ENCODE measurements at regions of chr12 and their contacts with region 1.

Region 1: GRCh38 chr12:62603061-62603810 is 136.6 kb downstream of the MON2 start:
- DNase-seq: peak; percentile 45
- ATAC-seq: peak; percentile 80
- H3K4me3 ChIP-seq: peak overlapping the region; percentile 77
- H3K27ac ChIP-seq: peak overlapping the region; percentile 99
- H3K4me1 ChIP-seq: peaks cover 17% of the 10 kb centered on the region; the same call in 1 of the 2 replicates
- H3K27me3 ChIP-seq: no peaks in the 10 kb centered on the region
- CTCF ChIP-seq: peak; percentile 28 to 51 (median 40); a peak in 4 of 6 replicates
- EP300 ChIP-seq: peak in 1 of 2 experiments; percentile 17; a peak in 1 of 4 replicates
- POLR2A ChIP-seq: peak; percentile 88
- RAD21 ChIP-seq: peak; percentile 31; the same call in 1 of the 2 replicates

Region 2: DNA sequence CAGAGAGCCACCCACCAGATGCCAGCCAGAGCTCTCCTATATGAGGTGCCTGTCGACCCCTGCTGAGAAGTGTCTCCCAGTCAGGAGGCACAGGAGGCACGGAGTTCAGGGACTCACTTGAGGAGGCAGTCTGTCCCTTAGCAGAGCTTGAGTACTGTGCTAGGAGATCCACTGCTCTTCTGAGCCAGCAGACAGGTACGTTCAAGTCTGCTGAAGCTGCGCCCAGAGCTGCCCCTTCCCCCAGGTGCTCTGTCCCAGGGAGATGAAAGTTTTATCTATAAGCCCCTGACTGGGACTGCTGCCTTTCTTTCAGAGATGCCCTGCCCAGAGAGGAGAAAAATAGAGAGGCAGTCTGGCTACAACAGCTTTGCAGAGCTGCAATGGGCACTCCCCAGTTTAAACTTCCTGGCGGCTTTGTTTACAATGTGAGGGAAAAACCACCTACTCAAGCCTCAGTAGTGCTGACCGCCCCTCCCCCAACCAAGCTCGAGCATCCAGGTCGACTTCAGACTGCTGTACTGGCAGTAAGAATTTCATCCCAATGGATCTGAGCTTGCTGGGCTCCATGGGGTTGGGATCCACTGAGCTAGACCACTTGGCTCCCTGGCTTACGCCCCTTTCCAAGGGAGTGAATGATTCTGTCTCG is 489.7 kb before region 1 on chr12:
- CTCF ChIA-PET with region 1: no interaction called
- POLR2A ChIA-PET with region 1: no interaction called
- RAD21 ChIA-PET with region 1: no interaction called
- SMC1A ChIA-PET with region 1: no interaction called
- in situ Hi-C with region 1: no loop called
- intact Hi-C with region 1: no loop called
- DNase-seq: no peak
- ATAC-seq: no peak
- H3K4me3 ChIP-seq: no peak overlapping the region
- H3K27ac ChIP-seq: no peak overlapping the region
- H3K4me1 ChIP-seq: no peaks in the 10 kb centered on the region
- H3K27me3 ChIP-seq: no peaks in the 10 kb centered on the region
- CTCF ChIP-seq: no peak
- EP300 ChIP-seq: no peak
- POLR2A ChIP-seq: no peak
- RAD21 ChIP-seq: no peak

Region 3: GRCh38 chr12:62466594-62467491 is 136.4 kb before region 1 on chr12 and contains the start of gene MON2:
- CTCF ChIA-PET with region 1: interaction called, 3 read pairs
- POLR2A ChIA-PET with region 1: interaction called, 4 read pairs
- RAD21 ChIA-PET with region 1: interaction called, 7 read pairs
- SMC1A ChIA-PET with region 1: no interaction called
- in situ Hi-C with region 1: no loop called
- intact Hi-C with region 1: loop called (anchors 2 kb)
- DNase-seq: peak; percentile 41
- ATAC-seq: peak; percentile 99
- H3K4me3 ChIP-seq: peak within 1 kb of the TSS; percentile 87
- H3K27ac ChIP-seq: peak within 1 kb of the TSS; percentile 91
- H3K4me1 ChIP-seq: no peaks in the 10 kb centered on the region
- H3K27me3 ChIP-seq: no peaks in the 10 kb centered on the region
- CTCF ChIP-seq: no peak
- EP300 ChIP-seq: no peak
- POLR2A ChIP-seq: peak; percentile 98
- RAD21 ChIP-seq: no peak
- polyA plus RNA-seq, gene MON2: 5.4 to 5.9 TPM

Region 4: GRCh38 chr12:62588916-62589315 is 14.3 kb before region 1 on chr12:
- CTCF ChIA-PET with region 1: interaction called, 4 read pairs
- POLR2A ChIA-PET with region 1: interaction called, 5 read pairs
- RAD21 ChIA-PET with region 1: interaction called, 9 read pairs
- SMC1A ChIA-PET with region 1: interaction called, 11 read pairs
- in situ Hi-C with region 1: no loop called
- intact Hi-C with region 1: no loop called
- DNase-seq: no peak
- ATAC-seq: no peak
- H3K4me3 ChIP-seq: no peak overlapping the region
- H3K27ac ChIP-seq: no peak overlapping the region
- H3K4me1 ChIP-seq: no peaks in the 10 kb centered on the region
- H3K27me3 ChIP-seq: no peaks in the 10 kb centered on the region
- CTCF ChIP-seq: no peak
- EP300 ChIP-seq: no peak
- POLR2A ChIP-seq: no peak
- RAD21 ChIP-seq: no peak

Region 5: DNA sequence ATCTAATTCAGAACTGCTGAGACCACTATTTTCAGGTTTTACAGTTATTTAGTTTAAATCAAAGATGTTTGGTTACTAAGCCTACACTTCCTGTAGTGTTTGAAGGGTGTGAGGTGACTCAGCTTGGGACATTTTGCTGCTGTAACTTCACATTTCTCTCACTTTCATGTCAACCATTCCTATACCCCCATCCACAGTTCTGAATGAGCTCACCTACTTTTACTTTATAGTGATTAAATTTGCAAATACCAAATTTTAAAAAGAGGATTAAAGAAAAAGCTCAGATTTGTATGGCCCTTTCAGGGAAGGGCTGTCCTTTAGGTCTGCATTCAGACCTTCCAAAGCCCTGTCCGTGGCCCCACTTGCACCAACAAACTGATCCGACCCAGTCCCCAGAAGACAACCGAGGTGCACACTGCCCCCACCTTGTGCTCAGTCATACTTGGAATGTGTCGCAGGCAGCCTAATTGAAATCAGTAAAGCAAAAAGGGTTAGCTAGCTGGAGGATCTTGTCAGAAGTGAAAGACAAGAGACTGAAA is 37.7 kb after region 1 on chr12:
- CTCF ChIA-PET with region 1: interaction called, 8 read pairs
- POLR2A ChIA-PET with region 1: interaction called, 7 read pairs
- RAD21 ChIA-PET with region 1: interaction called, 13 read pairs
- SMC1A ChIA-PET with region 1: interaction called, 12 read pairs
- in situ Hi-C with region 1: no loop called
- intact Hi-C with region 1: no loop called
- DNase-seq: peak; percentile 27
- ATAC-seq: peak; percentile 95
- H3K4me3 ChIP-seq: peak overlapping the region; percentile 4; the same call in 1 of the 2 replicates
- H3K27ac ChIP-seq: no peak overlapping the region
- H3K4me1 ChIP-seq: peaks cover 6% of the 10 kb centered on the region; the same call in 1 of the 2 replicates
- H3K27me3 ChIP-seq: no peaks in the 10 kb centered on the region
- CTCF ChIP-seq: no peak
- EP300 ChIP-seq: 0 out of 4 replicates have a peak, but pooled peaks of 1 of the 2 experiments have one; percentile 21
- POLR2A ChIP-seq: no peak
- RAD21 ChIP-seq: peak; percentile 26; the same call in 1 of the 2 replicates

Region 6: DNA sequence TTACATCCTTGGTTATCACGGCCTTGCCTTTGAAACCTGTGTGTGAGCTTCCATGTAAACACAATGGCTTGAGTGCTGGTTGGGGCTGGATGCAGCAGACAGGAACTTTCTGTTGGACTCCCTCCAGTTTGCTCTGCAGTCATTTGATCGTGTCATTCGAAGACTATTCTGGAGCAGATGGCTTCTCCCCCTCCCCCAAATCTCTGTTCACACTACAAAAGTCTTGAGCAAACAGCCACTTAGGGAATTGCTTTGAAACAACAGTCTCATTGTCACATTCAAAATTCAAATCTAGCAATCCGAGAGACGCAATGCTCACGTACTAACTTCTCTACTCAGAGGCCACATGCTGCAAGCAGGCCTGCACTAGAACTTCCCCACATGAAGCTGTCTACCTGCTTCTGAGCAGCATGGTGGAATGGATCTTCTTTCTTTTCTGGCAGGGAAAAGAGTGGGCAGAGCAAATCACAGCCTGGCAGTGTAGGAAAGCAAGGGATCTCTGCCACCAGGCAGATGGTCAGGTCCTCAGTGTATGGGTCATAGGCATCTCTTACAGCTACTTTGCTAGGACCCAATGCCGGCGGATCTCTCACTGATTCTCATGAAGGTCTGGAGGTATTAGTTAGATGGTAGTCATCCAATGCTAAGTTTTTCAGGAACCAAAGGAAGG is 117.6 kb after region 1 on chr12:
- CTCF ChIA-PET with region 1: no interaction called
- POLR2A ChIA-PET with region 1: no interaction called
- RAD21 ChIA-PET with region 1: no interaction called
- SMC1A ChIA-PET with region 1: no interaction called
- in situ Hi-C with region 1: no loop called
- intact Hi-C with region 1: no loop called
- DNase-seq: no peak
- ATAC-seq: no peak
- H3K4me3 ChIP-seq: no peak overlapping the region
- H3K27ac ChIP-seq: no peak overlapping the region
- H3K4me1 ChIP-seq: no peaks in the 10 kb centered on the region
- H3K27me3 ChIP-seq: no peaks in the 10 kb centered on the region
- CTCF ChIP-seq: no peak
- EP300 ChIP-seq: no peak
- POLR2A ChIP-seq: no peak
- RAD21 ChIP-seq: no peak

Region 7: DNA sequence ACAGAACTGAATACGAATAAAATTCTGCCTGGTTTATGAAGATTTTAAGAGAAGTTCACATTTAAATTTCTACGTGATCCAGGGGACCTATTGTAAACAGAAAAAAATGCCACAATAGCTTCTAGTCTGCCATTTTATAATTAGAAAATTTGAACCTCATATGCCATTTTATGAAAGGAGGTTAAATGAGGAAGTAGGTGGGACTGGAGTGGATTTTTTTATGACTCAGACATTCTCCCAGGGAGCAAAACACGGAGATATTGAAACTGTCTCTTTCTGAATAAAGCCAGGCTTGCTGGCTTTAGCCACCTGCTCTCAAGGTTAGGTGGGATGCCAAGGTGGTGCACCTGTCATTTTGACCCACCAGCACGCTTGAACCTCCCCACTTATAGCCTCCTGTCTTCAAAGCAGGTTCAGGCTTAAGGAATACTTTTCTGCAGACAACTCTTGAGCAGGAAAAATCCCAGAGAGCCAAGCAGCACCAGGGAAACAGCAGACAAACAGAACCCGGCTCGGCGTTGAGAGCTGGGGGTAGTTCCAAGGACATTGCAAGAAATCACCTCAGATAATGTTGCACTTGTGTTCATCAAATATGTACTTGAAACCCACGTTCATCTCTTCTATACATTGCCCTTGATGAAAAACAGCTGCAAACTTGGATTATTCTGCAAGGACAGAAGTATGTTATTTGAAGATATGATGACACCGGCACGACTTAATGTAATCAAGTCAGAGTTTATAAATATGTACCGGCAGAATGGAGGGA is 128.0 kb after region 1 on chr12:
- CTCF ChIA-PET with region 1: no interaction called
- POLR2A ChIA-PET with region 1: no interaction called
- RAD21 ChIA-PET with region 1: no interaction called
- SMC1A ChIA-PET with region 1: no interaction called
- in situ Hi-C with region 1: no loop called
- intact Hi-C with region 1: loop called (anchors 5 kb)
- DNase-seq: no peak
- ATAC-seq: peak; percentile 79
- H3K4me3 ChIP-seq: no peak overlapping the region
- H3K27ac ChIP-seq: no peak overlapping the region
- H3K4me1 ChIP-seq: peaks cover 9% of the 10 kb centered on the region
- H3K27me3 ChIP-seq: no peaks in the 10 kb centered on the region
- CTCF ChIP-seq: no peak
- EP300 ChIP-seq: no peak
- POLR2A ChIP-seq: no peak
- RAD21 ChIP-seq: no peak

Region 8: GRCh38 chr12:62799126-62799736 is 196.0 kb after region 1 on chr12:
- CTCF ChIA-PET with region 1: interaction called, 72 read pairs
- POLR2A ChIA-PET with region 1: interaction called, 8 read pairs
- RAD21 ChIA-PET with region 1: interaction called, 22 read pairs
- SMC1A ChIA-PET with region 1: interaction called, 19 read pairs
- in situ Hi-C with region 1: no loop called
- intact Hi-C with region 1: loop called (anchors 2 kb)
- DNase-seq: no peak
- ATAC-seq: peak; percentile 97
- H3K4me3 ChIP-seq: no peak overlapping the region
- H3K27ac ChIP-seq: no peak overlapping the region
- H3K4me1 ChIP-seq: no peaks in the 10 kb centered on the region; the same call in 1 of the 2 replicates
- H3K27me3 ChIP-seq: no peaks in the 10 kb centered on the region
- CTCF ChIP-seq: peak; percentile 94 to 98 (median 96); a peak in 5 of 6 replicates
- EP300 ChIP-seq: no peak
- POLR2A ChIP-seq: no peak
- RAD21 ChIP-seq: peak; percentile 97